ENCODE measurements at regions of chr12 and their contacts with region 1.

Region 1: DNA sequence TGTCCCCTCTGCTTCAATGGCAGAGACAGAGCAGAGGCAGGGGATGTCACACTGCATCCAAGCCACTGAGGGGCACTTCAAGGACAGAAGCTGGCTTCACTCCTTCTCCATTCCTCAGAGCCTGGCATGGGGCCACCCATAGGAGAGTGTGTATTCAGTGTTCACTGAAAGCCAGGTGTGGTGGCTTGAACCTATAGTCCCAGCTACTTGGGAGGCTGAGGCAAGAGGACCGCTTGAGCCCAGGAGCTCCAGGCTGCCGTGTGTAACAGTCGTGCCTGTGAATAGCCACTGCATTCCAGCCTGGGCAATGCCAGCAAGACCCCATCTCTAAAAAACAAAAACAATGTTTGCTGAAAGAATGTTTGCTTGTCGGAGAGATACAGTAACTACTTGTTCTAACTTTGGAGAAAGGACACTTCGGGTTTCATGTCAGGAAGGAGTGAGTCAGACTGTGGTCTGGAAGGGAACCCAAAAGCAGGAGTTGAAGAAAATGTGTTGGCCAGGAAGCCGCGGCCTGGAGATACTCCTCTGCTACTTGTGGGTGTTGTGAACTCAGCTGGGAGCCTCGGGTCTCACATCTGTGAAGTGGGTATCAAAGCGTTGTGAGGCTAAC is 43.4 kb downstream of the ELK3 start:
- DNase-seq: peak; percentile 78
- ATAC-seq: peak; percentile 43
- H3K4me3 Mint-ChIP-seq: peak overlapping the region; percentile 45
- H3K27ac Mint-ChIP-seq: peak overlapping the region; percentile 65
- H3K4me1 Mint-ChIP-seq: peaks cover 56% of the 10 kb centered on the region
- H3K27me3 Mint-ChIP-seq: no peaks in the 10 kb centered on the region

Region 2: GRCh38 chr12:96194971-96195844 is 42.4 kb before region 1 on chr12:
- CTCF ChIA-PET with region 1: no interaction called
- DNase-seq: peak; percentile 85
- ATAC-seq: peak; percentile 74
- H3K4me3 Mint-ChIP-seq: peak overlapping the region; percentile 97
- H3K27ac Mint-ChIP-seq: peak overlapping the region; percentile 97
- H3K4me1 Mint-ChIP-seq: peaks cover 40% of the 10 kb centered on the region
- H3K27me3 Mint-ChIP-seq: no peaks in the 10 kb centered on the region

Region 3: GRCh38 chr12:96215919-96216273 is 21.7 kb before region 1 on chr12:
- CTCF ChIA-PET with region 1: interaction called, 21 read pairs
- DNase-seq: no peak
- ATAC-seq: no peak
- H3K4me3 Mint-ChIP-seq: no peak overlapping the region
- H3K27ac Mint-ChIP-seq: no peak overlapping the region
- H3K4me1 Mint-ChIP-seq: peaks cover 37% of the 10 kb centered on the region
- H3K27me3 Mint-ChIP-seq: no peaks in the 10 kb centered on the region